Naive thymus-derived CD4-positive, alpha-beta T cell (primary cell): ENCODE measurements at regions of chr10 and their contacts with region 1.

Region 1: DNA sequence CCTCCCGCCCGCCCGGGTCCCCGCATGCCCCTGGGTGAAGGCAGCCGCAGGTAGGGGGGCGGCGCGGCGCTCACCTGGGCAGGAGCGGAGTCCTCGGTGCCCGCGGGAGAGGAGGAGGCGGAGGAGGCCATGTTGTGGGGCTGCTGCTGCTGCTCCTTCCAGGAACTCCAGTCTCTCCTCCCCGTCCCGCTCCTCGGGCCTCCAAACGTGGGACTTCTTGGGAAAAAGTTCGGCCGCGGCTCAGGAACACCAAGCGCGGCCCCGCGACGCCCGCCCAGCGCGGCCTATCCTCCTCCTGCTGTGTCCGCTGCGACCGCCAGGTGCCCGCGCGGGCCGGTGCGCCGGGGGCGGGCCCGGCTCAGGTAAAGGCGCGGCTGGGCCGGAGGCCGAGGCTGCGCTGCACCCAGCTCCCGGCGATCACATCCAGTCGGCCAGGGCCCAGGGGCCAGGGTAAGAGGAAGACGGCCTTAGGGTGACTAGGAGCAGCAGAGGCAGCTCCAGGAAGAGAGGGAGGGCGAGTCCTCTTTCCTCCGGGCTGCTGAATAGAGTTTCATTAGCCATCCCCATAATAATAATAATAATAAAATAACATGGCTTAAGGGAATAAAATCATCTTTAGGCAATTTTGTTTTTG is 45.0 kb upstream of the CDK1 start:
- DNase-seq: peak; percentile 29 to 66 (median 55)
- ATAC-seq: peak; percentile 80
- H3K4me3 ChIP-seq: peak overlapping the region; percentile 63
- H3K4me3 Mint-ChIP-seq: peak overlapping the region; percentile 59 to 96 (median 80)
- H3K27ac ChIP-seq: peak overlapping the region; percentile 89
- H3K27ac Mint-ChIP-seq: peak overlapping the region in 7 of 9 donors; percentile 33 to 98 (median 58)
- H3K4me1 ChIP-seq: peaks cover 17 to 35% of the 10 kb centered on the region in 2 donors
- H3K4me1 Mint-ChIP-seq: peaks cover 15 to 39% (median 31%) of the 10 kb centered on the region in 7 donors
- H3K27me3 ChIP-seq: no peaks in the 10 kb centered on the region
- H3K27me3 Mint-ChIP-seq: peaks cover 0 to 7% (median 2%) of the 10 kb centered on the region in 5 donors

Region 2: GRCh38 chr10:60708666-60709585 is 24.4 kb before region 1 on chr10:
- CTCF ChIA-PET with region 1: no interaction called
- POLR2A ChIA-PET with region 1: interaction called, 4 read pairs
- intact Hi-C with region 1: loop called (anchors 1 to 2 kb)
- DNase-seq: peak in 4 of 9 donors; percentile 34 to 54 (median 46)
- ATAC-seq: peak; percentile 66
- H3K4me3 ChIP-seq: no peak overlapping the region
- H3K4me3 Mint-ChIP-seq: peak overlapping the region in 9 of 10 donors; percentile 3 to 82 (median 37)
- H3K27ac ChIP-seq: no peak overlapping the region
- H3K27ac Mint-ChIP-seq: peak overlapping the region; percentile 40 to 95 (median 80)
- H3K4me1 ChIP-seq: peaks cover 10 to 22% of the 10 kb centered on the region in 2 donors
- H3K4me1 Mint-ChIP-seq: peaks cover 34 to 86% (median 59%) of the 10 kb centered on the region in 7 donors
- H3K27me3 ChIP-seq: no peaks in the 10 kb centered on the region
- H3K27me3 Mint-ChIP-seq: no peaks in the 10 kb centered on the region

Region 3: GRCh38 chr10:61135276-61135721 is 402.0 kb after region 1 on chr10:
- CTCF ChIA-PET with region 1: no interaction called
- POLR2A ChIA-PET with region 1: no interaction called
- intact Hi-C with region 1: no loop called
- DNase-seq: no peak
- ATAC-seq: no peak
- H3K4me3 ChIP-seq: no peak overlapping the region
- H3K4me3 Mint-ChIP-seq: no peak overlapping the region
- H3K27ac ChIP-seq: no peak overlapping the region
- H3K27ac Mint-ChIP-seq: no peak overlapping the region
- H3K4me1 ChIP-seq: no peaks in the 10 kb centered on the region
- H3K4me1 Mint-ChIP-seq: no peaks in the 10 kb centered on the region
- H3K27me3 ChIP-seq: no peaks in the 10 kb centered on the region
- H3K27me3 Mint-ChIP-seq: peaks cover 0 to 11% (median 6%) of the 10 kb centered on the region in 5 donors